ENCODE measurements at regions of chr1 and their contacts with region 1.

Region 1: GRCh38 chr1:67749844-67750689 is 65.1 kb downstream of the GADD45A start:
- DNase-seq: peak; percentile 83 to 85
- H3K4me3 ChIP-seq: no peak overlapping the region
- H3K27ac ChIP-seq: peak overlapping the region; percentile 95 to 96 (median 95)
- H3K4me1 ChIP-seq: peaks cover 59 to 86% of the 10 kb centered on the region in 2 donors
- H3K27me3 ChIP-seq: no peaks in the 10 kb centered on the region
- CTCF ChIP-seq: no peak
- POLR2A ChIP-seq: peak in 1 of 2 donors; percentile 83

Region 2: DNA sequence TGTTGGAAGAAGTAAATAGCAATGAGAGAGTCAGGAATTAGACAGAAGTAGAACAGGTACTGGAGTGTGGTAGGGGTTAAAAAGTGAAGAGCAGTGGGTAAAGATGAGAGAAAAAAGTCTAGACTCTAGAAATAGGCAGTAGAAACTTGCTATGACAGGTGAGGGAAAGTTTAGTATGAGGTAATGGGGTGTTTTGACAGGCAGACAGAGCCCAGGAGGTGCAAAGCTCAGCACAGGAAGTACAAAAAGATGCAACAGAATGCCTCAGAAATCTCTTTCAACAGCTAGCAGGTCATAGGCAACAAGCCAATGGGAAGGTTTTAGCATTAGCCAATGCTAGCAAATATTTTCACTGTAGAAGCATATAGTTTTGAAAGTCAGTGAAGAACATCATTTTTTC is 1535.2 kb before region 1 on chr1:
- intact Hi-C with region 1: no loop called
- DNase-seq: no peak
- H3K4me3 ChIP-seq: no peak overlapping the region
- H3K27ac ChIP-seq: no peak overlapping the region
- H3K4me1 ChIP-seq: no peaks in the 10 kb centered on the region
- H3K27me3 ChIP-seq: no peaks in the 10 kb centered on the region
- CTCF ChIP-seq: no peak
- POLR2A ChIP-seq: no peak

Region 3: GRCh38 chr1:67685067-67685557 is 65.0 kb before region 1 on chr1 and contains the start of gene GADD45A:
- intact Hi-C with region 1: loop called (anchors 10 kb)
- DNase-seq: peak; percentile 99
- H3K4me3 ChIP-seq: peak within 1 kb of the TSS; percentile 9 to 95 (median 94)
- H3K27ac ChIP-seq: peak within 1 kb of the TSS; percentile 96 to 99 (median 98)
- H3K4me1 ChIP-seq: peaks cover 15 to 27% of the 10 kb centered on the region in 2 donors
- H3K27me3 ChIP-seq: no peaks in the 10 kb centered on the region
- CTCF ChIP-seq: peak in 1 of 6 experiments; percentile 19
- POLR2A ChIP-seq: peak; percentile 99 to 100
- total RNA-seq, gene GADD45A: 27.2 to 95.5 (median 62.9) TPM

Region 4: DNA sequence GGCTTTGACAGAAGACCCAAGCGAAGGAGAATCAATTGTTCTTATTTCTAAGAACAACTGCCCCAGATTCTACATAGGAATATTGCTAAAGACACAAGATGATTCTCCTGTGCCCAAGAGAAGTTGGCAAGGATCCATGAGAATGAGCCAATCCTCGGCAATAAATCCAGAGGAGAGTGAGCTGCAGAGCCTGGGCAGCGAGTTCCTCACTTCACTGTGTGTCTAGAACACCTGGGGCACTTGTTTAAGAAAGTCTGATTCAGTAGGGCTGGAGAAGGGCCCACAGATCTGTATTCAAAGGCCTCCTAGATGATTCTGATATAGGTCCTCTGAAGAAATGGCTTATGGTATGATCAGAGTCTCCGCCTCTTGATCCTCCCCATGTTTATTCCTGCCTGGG is 33.3 kb before region 1 on chr1:
- intact Hi-C with region 1: loop called (anchors 5 kb)
- DNase-seq: peak; percentile 58 to 60
- H3K4me3 ChIP-seq: no peak overlapping the region
- H3K27ac ChIP-seq: peak overlapping the region in 2 of 3 donors; percentile 3 to 72
- H3K4me1 ChIP-seq: peaks cover 31 to 59% of the 10 kb centered on the region in 2 donors
- H3K27me3 ChIP-seq: no peaks in the 10 kb centered on the region
- CTCF ChIP-seq: no peak
- POLR2A ChIP-seq: no peak

Region 5: DNA sequence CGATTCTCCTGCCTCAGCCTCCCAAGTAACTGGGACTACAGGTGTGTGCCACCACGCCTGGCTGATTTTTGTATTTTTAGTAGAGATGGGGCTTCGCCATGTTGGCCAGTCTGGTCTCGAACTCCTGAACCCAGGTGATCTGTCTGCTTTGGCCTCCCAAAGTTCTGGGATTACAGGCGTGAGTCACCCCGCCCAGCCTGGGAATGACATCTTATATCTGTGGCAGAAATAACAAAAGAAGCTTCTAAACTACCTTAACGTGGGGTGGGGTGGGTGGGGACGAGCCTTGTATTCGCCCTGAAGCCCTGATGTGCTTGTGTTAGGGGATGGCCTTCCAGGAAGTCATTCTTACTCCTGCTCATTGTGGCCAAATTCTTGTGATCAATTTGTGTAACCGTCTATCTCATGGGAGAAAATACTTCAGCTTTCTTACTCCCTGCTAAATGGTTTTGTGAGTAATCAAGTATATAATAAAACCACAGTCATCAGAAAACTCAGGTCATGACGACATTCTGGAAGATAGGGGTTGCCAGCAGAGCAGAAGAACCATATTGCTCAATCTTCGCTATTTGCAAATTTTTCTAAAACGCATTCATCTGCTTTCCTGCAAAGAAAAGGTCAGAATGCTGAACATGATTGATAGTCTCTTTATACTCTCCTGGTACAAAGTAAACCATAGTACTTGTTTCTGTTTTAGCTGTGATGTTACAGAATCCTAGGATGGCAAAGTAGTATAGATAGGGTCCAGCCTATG is 237.2 kb after region 1 on chr1:
- intact Hi-C with region 1: no loop called
- DNase-seq: no peak
- H3K4me3 ChIP-seq: no peak overlapping the region
- H3K27ac ChIP-seq: no peak overlapping the region
- H3K4me1 ChIP-seq: no peaks in the 10 kb centered on the region
- H3K27me3 ChIP-seq: no peaks in the 10 kb centered on the region
- CTCF ChIP-seq: no peak
- POLR2A ChIP-seq: no peak